Dorsolateral prefrontal cortex (tissue), 120 donors: ENCODE measurements at regions of chr14 and their contacts with region 1.

Region 1: GRCh38 chr14:65281991-65282895 is 130.3 kb upstream of the FUT8 start:
- DNase-seq: peak; percentile 17 to 88 (median 80)
- H3K4me3 ChIP-seq: peak overlapping the region; percentile 25 to 69 (median 47)
- H3K27ac ChIP-seq: peak overlapping the region; percentile 83 to 100 (median 96)
- H3K27me3 ChIP-seq: no peaks in the 10 kb centered on the region
- CTCF ChIP-seq: peak in 10 of 56 donors; percentile 4 to 29 (median 10)

Region 2: DNA sequence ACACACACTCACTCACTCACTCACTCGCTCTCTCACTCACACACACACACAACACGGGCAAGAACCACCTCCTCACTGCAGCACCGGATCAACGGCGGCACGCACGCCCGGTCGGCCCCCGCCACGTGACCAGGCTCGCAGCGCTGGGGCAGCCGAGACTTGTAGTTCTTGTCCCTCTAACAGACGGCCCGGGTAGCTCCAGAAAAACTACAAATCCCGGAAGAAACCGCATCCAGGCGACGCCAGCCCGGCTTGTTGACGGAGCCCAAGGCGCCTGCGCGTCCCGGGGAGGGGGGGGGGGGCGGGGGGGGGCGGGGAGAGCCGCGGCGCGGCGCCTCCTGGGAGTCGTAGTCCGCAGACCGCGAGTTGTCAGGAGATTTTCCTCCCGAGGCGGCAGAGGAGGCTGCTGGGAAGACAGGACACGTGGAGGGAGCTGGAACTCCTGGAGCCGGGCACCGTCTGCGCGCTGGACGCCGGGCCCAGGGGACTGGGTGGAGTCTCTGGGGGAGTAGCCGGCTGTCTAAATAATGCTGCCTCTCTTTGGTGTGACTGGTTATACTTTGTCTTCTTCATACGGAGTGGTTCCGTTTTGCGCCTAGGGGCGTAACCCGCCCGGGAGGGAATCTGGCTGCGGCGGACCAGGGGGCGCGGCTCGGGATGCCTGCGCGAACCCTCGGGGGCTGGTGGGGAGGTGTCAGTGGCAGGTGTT is 179.6 kb before region 1 on chr14 and contains the start of gene MAX:
- intact Hi-C with region 1: no loop called
- DNase-seq: peak; percentile 98 to 100 (median 99)
- H3K4me3 ChIP-seq: peak within 1 kb of the TSS; percentile 74 to 100 (median 93)
- H3K27ac ChIP-seq: peak within 1 kb of the TSS in 54 of 59 donors; percentile 31 to 92 (median 77)
- H3K27me3 ChIP-seq: no peaks in the 10 kb centered on the region
- CTCF ChIP-seq: peak in 34 of 56 donors; percentile 5 to 58 (median 27)
- total RNA-seq, gene MAX: 73.6 to 138 (median 106) TPM

Region 3: DNA sequence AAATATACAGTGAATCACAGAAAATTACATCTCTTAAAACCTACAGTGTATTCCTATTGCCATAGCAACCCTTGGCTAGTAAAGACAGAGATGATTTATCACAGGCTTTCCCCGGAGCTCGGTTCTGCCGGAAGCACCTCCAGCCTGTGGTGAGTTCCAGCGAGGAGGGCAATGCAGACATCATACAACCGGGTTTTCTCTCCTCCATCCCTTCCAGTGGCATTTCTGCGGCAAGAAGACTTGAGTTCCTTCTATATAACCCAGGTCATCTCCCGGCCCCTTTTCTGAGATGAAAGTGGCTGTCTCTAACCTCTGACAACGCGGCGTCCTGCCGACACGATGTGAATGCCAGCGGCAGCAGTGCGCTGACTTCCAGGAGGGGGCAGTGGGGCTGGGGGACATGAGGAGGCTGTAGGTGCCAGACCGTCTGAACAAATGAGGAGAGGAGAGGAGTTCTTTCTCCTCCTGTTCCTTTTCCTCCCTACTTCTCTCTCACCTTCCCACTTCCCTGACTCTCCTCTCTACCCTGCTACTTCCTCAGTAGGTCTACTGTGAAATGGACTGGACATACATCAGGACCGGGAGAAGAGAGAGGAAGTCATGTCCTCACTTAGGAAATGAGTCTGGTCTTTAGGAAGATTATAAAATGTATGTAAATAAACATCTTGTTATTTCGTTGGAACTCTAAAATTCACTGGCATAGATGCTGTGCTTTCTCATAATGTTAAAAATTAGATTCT is 111.3 kb before region 1 on chr14:
- intact Hi-C with region 1: loop called (anchors 1 to 2 kb)
- DNase-seq: peak; percentile 18 to 78 (median 60)
- H3K4me3 ChIP-seq: peak overlapping the region; percentile 30 to 75 (median 54)
- H3K27ac ChIP-seq: peak overlapping the region in 58 of 59 donors; percentile 59 to 98 (median 91)
- H3K27me3 ChIP-seq: no peaks in the 10 kb centered on the region
- CTCF ChIP-seq: peak in 46 of 56 donors; percentile 4 to 66 (median 42)

Region 4: DNA sequence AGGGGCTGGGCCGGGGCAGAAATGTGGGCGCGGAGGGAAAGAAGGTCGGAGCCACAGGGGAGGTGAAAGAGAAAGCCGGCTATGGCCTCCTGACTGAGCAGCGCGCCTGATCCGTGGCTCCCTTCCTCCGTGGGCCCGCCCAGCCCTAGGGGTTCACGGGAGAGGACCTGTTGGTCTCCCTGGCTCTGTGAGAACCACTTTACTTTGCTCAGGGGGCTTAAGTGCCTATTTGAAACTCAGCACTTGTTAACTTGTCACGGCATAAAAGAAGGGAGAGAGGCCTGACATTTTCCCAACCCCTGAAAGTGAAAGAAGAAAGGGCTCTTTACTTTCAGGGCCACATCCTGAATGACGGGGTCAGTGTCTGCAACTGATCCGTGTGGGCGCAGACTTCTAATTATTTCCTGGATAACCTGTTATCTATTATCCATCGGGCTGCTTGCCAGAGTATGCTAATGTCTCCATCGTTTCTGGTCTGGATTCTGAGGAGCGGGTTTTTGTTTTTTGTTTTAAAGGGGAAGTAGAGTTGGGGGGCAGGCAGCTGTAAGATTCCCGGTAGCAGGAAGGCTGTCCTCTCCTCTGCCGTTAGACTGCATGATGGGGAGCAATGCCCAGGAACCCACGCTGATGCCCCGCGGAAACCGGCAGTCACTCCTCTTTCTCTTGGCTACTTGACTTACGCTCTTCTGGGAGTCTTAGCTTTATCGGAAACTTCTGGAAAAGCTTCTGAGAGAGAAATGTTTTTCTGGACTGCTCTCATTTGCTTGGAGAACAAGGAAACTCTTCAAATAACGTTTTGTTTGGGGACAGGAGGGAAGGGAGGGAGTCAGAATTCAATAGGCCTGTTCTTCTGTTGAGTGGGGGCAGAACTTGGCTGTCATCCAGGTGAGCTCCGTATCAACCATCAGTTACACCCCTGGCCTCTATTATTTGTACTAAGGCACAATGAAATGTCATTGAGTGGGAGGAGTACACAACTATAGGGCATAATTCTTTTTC is 52.2 kb before region 1 on chr14:
- intact Hi-C with region 1: loop called (anchors 1 kb)
- DNase-seq: peak in 9 of 10 donors; percentile 52 to 94 (median 80)
- H3K4me3 ChIP-seq: peak overlapping the region in 57 of 59 donors; percentile 5 to 63 (median 42)
- H3K27ac ChIP-seq: peak overlapping the region; percentile 93 to 100 (median 98)
- H3K27me3 ChIP-seq: no peaks in the 10 kb centered on the region
- CTCF ChIP-seq: peak in 2 of 56 donors; percentile 12 to 20

Region 5: DNA sequence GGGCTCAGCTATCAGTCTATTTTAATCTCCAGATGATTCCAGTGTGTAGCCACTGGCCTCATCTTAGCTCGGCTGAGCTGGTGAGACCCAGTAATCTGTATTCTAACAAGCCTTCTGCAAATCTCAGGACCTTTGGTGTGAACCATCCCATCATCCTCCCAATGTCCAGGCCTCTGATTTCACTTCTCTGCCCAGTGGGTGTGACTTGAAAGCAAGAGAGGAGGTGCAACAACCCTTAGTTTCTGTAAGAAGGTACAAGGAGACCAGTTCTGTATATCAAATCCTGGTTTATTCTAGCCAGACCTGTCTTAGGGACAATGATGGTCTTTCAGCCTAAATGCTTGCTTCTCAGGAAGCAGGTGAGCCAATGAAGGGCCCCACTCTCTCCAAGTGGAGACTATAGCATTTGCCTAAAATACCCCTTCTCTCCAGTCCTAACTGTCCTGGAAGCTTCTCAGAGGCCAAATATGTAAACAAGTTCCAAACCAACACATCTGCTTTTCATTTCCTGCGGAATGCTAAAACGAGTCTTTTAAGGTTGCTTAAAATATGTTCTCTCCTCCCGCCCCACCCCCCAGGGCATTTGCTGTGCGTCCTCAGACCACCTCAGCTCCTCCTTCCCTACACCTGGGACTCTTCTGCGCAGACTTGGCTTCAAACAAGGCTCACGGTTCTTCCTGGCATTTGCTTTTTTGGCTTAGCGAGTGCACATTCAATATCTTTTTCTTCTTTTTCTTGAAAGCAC is 51.9 kb after region 1 on chr14:
- intact Hi-C with region 1: no loop called
- DNase-seq: no peak
- H3K4me3 ChIP-seq: no peak overlapping the region
- H3K27ac ChIP-seq: no peak overlapping the region
- H3K27me3 ChIP-seq: no peaks in the 10 kb centered on the region
- CTCF ChIP-seq: no peak

Region 6: GRCh38 chr14:65361920-65362319 is 79.7 kb after region 1 on chr14:
- intact Hi-C with region 1: loop called (anchors 2 to 5 kb)
- DNase-seq: peak in 3 of 10 donors; percentile 42 to 69 (median 61)
- H3K4me3 ChIP-seq: peak overlapping the region in 8 of 59 donors; percentile 7 to 39 (median 12)
- H3K27ac ChIP-seq: peak overlapping the region in 58 of 59 donors; percentile 41 to 96 (median 84)
- H3K27me3 ChIP-seq: no peaks in the 10 kb centered on the region
- CTCF ChIP-seq: peak in 2 of 56 donors; percentile 13 to 15

Region 7: GRCh38 chr14:65373679-65374039 is 91.4 kb after region 1 on chr14:
- intact Hi-C with region 1: loop called in 1 of 2 experiments (anchors 1 kb)
- DNase-seq: peak in 9 of 10 donors; percentile 41 to 80 (median 65)
- H3K4me3 ChIP-seq: peak overlapping the region in 48 of 59 donors; percentile 4 to 66 (median 38)
- H3K27ac ChIP-seq: peak overlapping the region in 57 of 59 donors; percentile 58 to 97 (median 86)
- H3K27me3 ChIP-seq: peaks cover 0 to 5% (median 0%) of the 10 kb centered on the region in 45 donors
- CTCF ChIP-seq: peak in 50 of 56 donors; percentile 24 to 75 (median 48)